ENCODE measurements at regions of chr18 and their contacts with region 1.

Region 1: GRCh38 chr18:73774811-73775509 is 372.7 kb downstream of the FBXO15 start:
- DNase-seq: peak; percentile 76
- H3K4me3 ChIP-seq: no peak overlapping the region
- H3K27ac ChIP-seq: no peak overlapping the region
- H3K4me1 ChIP-seq: no peaks in the 10 kb centered on the region
- H3K27me3 ChIP-seq: no peaks in the 10 kb centered on the region
- CTCF ChIP-seq: peak in 2 of 4 experiments; percentile 24 to 31
- POLR2A ChIP-seq: no peak

Region 2: GRCh38 chr18:73724958-73725357 is 50.0 kb before region 1 on chr18:
- intact Hi-C with region 1: no loop called
- DNase-seq: no peak
- H3K4me3 ChIP-seq: no peak overlapping the region
- H3K27ac ChIP-seq: no peak overlapping the region
- H3K4me1 ChIP-seq: no peaks in the 10 kb centered on the region
- H3K27me3 ChIP-seq: no peaks in the 10 kb centered on the region
- CTCF ChIP-seq: no peak
- POLR2A ChIP-seq: no peak

Region 3: DNA sequence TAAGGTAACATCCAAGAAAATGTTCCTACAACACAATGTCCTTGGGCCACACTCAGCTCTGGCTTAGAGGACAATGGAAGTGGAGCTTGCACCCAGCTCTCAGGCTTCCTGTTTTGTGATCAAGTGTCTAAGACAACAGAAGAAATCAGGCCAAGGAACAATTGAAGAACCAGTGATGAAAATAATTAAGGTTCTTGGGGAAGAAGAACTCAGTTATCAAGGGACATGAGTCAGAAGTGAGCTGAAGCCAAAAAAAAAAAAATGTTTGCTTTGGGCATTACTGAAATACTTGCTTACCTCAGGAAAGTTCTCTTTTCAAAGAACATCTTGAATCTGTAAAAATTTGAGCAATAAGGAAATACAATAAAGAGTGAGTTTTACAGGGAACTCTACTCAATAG is 73.7 kb after region 1 on chr18:
- intact Hi-C with region 1: no loop called
- DNase-seq: no peak
- H3K4me3 ChIP-seq: no peak overlapping the region
- H3K27ac ChIP-seq: no peak overlapping the region
- H3K4me1 ChIP-seq: no peaks in the 10 kb centered on the region
- H3K27me3 ChIP-seq: no peaks in the 10 kb centered on the region
- CTCF ChIP-seq: no peak
- POLR2A ChIP-seq: no peak

Region 4: GRCh38 chr18:74116633-74117554 is 341.9 kb after region 1 on chr18:
- intact Hi-C with region 1: loop called (anchors 10 kb)
- DNase-seq: no peak
- H3K4me3 ChIP-seq: no peak overlapping the region
- H3K27ac ChIP-seq: no peak overlapping the region
- H3K4me1 ChIP-seq: no peaks in the 10 kb centered on the region
- H3K27me3 ChIP-seq: no peaks in the 10 kb centered on the region
- CTCF ChIP-seq: peak in 3 of 4 experiments; percentile 50 to 61 (median 59)
- POLR2A ChIP-seq: no peak